Activated CD4-positive, alpha-beta T cell treated with anti-CD3 and anti-CD28 coated beads, Interleukin-2, amount 10 ng/mL, durations not matched to agents 24 days and 14 days (primary cell): ENCODE measurements at regions of chr19 and their contacts with region 1.

Region 1: DNA sequence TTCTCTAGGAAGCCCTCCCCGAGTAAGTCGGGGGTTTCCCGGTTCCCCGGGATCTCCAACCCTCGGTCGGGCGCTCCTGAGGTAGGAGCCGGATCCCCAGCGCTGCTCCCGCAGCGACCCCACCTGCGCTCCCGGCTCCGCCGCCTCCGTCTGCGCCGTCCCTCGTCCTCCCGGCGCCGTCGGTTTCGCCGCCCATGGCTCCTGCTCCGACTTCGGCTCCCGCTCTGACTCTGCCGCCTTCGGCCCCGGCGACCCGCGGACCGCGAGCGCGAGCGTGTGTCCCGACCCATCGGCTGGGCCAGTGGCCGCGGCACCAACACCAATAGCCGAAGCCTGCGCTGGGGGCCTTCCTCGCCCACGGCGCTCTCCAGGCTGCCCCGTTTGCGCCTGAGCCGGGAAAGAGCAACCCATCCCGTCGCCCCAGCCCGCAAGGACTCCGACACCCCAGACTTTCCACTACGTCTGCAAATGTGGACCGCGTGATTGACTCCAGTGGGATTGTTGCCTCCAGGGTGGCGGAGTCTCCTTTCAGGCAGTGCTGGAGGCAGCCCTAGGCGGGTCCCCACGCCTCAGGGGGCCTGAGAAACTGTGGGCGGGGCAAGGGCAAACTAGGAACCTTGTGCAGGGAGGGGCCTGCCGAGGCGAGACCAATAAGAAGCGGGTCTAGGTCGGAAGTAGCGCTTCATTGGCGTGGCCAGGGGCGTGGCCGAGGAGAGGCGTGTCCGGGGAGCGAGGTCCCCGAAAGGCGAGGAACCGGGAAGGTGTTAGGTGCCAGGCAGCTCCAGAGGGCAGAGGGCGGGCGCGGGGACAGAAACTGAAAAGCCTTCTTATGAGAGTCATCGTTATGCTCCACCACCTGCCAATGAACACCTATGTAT is at the start of gene CACTIN:
- DNase-seq: peak; percentile 100
- H3K4me3 Mint-ChIP-seq: peak within 1 kb of the TSS; percentile 93
- H3K27ac Mint-ChIP-seq: peak within 1 kb of the TSS; percentile 98
- H3K4me1 Mint-ChIP-seq: peaks cover 23% of the 10 kb centered on the region
- H3K27me3 Mint-ChIP-seq: no peaks in the 10 kb centered on the region
- total RNA-seq, gene CACTIN: 37.4 and 39.6 TPM in 2 replicates

Region 2: GRCh38 chr19:3505598-3506383 is 120.9 kb before region 1 on chr19 and contains the start of gene FZR1:
- intact Hi-C with region 1: loop called (anchors 1 kb)
- DNase-seq: peak; percentile 100
- H3K4me3 Mint-ChIP-seq: peak within 1 kb of the TSS; percentile 97
- H3K27ac Mint-ChIP-seq: peak within 1 kb of the TSS; percentile 91
- H3K4me1 Mint-ChIP-seq: peaks cover 32% of the 10 kb centered on the region
- H3K27me3 Mint-ChIP-seq: peaks cover under 1% of the 10 kb centered on the region
- total RNA-seq, gene FZR1: 37.3 and 38.7 TPM in 2 replicates

Region 3: GRCh38 chr19:3557461-3558248 is 69.1 kb before region 1 on chr19 and contains the start of gene MFSD12:
- intact Hi-C with region 1: loop called (anchors 5 kb)
- DNase-seq: peak; percentile 99
- H3K4me3 Mint-ChIP-seq: peak within 1 kb of the TSS; percentile 100
- H3K27ac Mint-ChIP-seq: peak within 1 kb of the TSS; percentile 95
- H3K4me1 Mint-ChIP-seq: peaks cover 33% of the 10 kb centered on the region
- H3K27me3 Mint-ChIP-seq: no peaks in the 10 kb centered on the region
- total RNA-seq, gene MFSD12: 119 and 124 TPM in 2 replicates

Region 4: GRCh38 chr19:3572132-3572854 is 54.4 kb before region 1 on chr19:
- intact Hi-C with region 1: loop called (anchors 2 kb)
- DNase-seq: peak; percentile 99
- H3K4me3 Mint-ChIP-seq: peak overlapping the region; percentile 83
- H3K27ac Mint-ChIP-seq: peak overlapping the region; percentile 81
- H3K4me1 Mint-ChIP-seq: peaks cover 11% of the 10 kb centered on the region
- H3K27me3 Mint-ChIP-seq: no peaks in the 10 kb centered on the region

Region 5: GRCh38 chr19:3700221-3701032 is 73.7 kb after region 1 on chr19 and contains the start of gene PIP5K1C:
- intact Hi-C with region 1: loop called (anchors 2 kb)
- DNase-seq: peak; percentile 98
- H3K4me3 Mint-ChIP-seq: peak within 1 kb of the TSS; percentile 91
- H3K27ac Mint-ChIP-seq: peak within 1 kb of the TSS; percentile 75
- H3K4me1 Mint-ChIP-seq: peaks cover 18% of the 10 kb centered on the region
- H3K27me3 Mint-ChIP-seq: peaks cover 2% of the 10 kb centered on the region
- total RNA-seq, gene PIP5K1C: 21.4 and 22.5 TPM in 2 replicates

Region 6: DNA sequence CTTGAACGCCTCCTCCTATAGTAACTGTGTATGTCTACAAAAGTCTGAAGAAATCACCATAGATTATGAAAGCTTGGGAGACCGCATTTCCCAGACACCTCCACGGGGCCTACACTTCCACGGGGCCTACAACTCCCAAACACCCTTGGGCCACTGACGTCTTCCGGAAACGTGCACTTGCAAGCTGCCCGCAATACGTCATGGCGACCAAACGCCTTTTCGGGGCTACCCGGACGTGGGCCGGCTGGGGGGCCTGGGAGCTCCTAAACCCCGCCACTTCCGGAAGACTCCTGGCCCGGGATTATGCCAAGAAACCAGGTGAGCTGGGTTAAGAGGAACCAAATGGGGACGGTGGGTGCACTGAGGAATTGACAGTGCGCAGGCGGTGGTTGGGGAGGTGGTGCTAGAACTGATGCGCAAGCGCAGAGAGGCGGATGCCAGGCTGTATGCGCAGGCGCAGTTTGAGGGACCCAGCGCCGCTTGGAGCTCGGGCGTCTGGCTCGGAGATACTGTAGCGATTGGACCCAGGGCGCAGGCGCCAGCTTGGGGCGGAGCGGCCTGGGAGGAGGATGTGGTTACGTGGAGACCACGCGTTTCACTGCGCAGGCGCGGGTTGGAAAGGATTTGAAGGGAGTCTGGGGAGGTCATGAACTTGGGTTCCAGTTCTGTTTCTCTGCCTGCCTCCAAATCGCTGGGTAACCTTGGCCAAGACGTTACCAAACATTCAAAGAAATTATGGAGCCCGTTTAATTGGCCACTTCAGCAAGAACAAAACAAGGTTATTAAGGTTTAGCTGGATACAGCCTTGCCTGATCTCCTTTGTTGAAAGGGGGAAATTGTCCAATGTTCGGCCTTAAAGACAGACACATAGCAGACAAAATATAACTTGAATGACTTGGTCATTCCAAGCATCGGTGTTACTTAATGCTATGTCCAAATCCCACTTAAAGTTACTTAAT is 136.1 kb after region 1 on chr19 and contains the start of gene MRPL54:
- intact Hi-C with region 1: loop called (anchors 1 kb)
- DNase-seq: peak; percentile 100
- H3K4me3 Mint-ChIP-seq: peak within 1 kb of the TSS; percentile 99
- H3K27ac Mint-ChIP-seq: peak within 1 kb of the TSS; percentile 100
- H3K4me1 Mint-ChIP-seq: peaks cover 32% of the 10 kb centered on the region
- H3K27me3 Mint-ChIP-seq: peaks cover 5% of the 10 kb centered on the region
- total RNA-seq, gene MRPL54: 91.4 and 96.6 TPM in 2 replicates